ENCODE measurements at regions of chr13 and their contacts with region 1.

Region 1: GRCh38 chr13:21603531-21604448 is at the start of gene MICU2:
- DNase-seq: peak; percentile 91 to 98 (median 95)
- ATAC-seq: peak; percentile 93
- H3K4me3 ChIP-seq: peak within 1 kb of the TSS; percentile 88
- H3K4me3 Mint-ChIP-seq: peak within 1 kb of the TSS; percentile 97
- H3K27ac ChIP-seq: peak within 1 kb of the TSS; percentile 91 to 97
- H3K27ac Mint-ChIP-seq: peak within 1 kb of the TSS; percentile 95
- H3K4me1 ChIP-seq: peaks cover 28% of the 10 kb centered on the region
- H3K4me1 Mint-ChIP-seq: peaks cover 45% of the 10 kb centered on the region
- H3K27me3 ChIP-seq: peaks cover 0 to under 1% of the 10 kb centered on the region in 2 experiments
- H3K27me3 Mint-ChIP-seq: peaks cover 10% of the 10 kb centered on the region
- CTCF ChIP-seq: no peak
- total RNA-seq, gene MICU2: 25.4 to 28.4 TPM

Region 2: DNA sequence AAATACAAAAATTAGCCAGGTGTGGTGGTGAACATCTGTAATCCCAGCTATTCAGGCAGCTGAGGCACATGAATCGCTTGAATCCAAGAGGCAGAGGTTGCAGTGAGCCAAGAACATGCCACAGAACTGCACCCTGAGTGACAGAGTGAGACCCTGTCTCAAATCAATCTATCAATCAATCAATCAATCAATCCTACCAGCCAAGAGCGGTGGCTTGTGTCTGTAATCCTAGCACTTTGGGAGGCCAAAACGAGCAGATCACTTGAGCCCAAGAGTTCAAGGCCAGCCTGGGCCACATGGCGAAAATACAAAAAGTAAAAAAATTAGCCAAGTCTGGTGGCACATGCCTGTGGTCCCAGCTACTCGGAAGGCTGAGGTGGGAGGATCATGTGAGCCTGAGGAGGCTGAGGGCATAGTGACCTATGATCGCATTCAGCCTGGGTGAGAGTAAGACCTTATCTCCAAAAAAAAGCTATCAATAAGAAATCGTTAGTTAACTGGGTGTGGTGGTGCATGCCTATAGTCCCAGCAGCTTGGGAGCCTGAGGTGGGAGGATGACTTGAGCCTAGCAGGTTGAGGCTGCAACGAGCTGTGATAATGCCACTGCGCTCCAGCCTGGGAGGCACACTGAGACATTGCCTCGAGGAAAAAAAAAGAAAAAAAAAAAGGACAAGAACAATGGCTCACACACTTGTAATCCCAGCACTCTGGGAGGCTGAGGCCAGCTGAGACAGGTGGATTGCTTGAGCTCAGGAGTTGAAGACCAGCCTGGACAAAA is 1837.4 kb before region 1 on chr13:
- CTCF ChIA-PET with region 1: no interaction called
- POLR2A ChIA-PET with region 1: no interaction called
- intact Hi-C with region 1: no loop called
- DNase-seq: no peak
- ATAC-seq: no peak
- H3K4me3 ChIP-seq: no peak overlapping the region
- H3K4me3 Mint-ChIP-seq: peak overlapping the region; percentile 56
- H3K27ac ChIP-seq: no peak overlapping the region
- H3K27ac Mint-ChIP-seq: peak overlapping the region; percentile 44
- H3K4me1 ChIP-seq: peaks cover 57% of the 10 kb centered on the region
- H3K4me1 Mint-ChIP-seq: peaks cover 68% of the 10 kb centered on the region
- H3K27me3 ChIP-seq: no peaks in the 10 kb centered on the region
- H3K27me3 Mint-ChIP-seq: no peaks in the 10 kb centered on the region
- CTCF ChIP-seq: no peak

Region 3: DNA sequence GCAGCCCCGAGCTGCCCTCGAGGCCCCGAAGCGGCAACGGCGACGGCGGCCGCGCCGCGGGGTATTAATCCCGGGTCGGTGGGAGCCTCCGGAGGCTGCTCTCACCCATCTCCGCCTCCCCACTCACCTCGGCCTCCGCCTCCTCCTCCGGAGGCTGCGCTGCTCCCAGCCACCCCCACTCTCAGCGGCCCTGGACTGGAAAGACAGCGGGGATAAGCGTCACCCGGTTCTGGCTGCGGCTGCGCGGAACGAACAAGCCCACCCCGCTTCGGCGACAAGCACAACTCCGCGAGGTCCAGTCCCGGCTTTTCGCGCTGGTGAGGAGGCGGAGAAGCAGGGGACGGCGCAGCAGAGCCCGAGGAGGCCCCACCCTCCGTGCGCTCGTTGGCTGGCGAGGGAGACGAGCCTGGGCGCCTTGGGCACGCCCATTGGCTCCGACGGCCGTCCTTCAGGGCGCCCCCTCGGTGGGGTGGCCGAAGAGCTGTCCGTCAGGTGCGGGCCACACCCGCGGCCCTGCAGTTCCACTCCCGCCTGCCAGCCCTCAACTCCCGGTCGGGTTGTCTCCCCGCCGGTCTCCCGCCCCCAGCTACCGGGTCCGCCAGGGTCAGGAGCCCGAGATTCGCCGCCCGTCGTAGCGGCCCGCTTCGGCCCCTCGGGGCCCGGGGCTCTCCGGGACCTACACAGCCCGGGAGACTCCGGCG is 1740.3 kb before region 1 on chr13 and contains the start of gene ZMYM5:
- CTCF ChIA-PET with region 1: no interaction called
- POLR2A ChIA-PET with region 1: interaction called, 7 read pairs
- intact Hi-C with region 1: loop called in 1 of 2 experiments (anchors 5 kb)
- DNase-seq: peak; percentile 85 to 98 (median 93)
- ATAC-seq: peak; percentile 81
- H3K4me3 ChIP-seq: peak within 1 kb of the TSS; percentile 84
- H3K4me3 Mint-ChIP-seq: peak within 1 kb of the TSS; percentile 98
- H3K27ac ChIP-seq: peak within 1 kb of the TSS; percentile 92
- H3K27ac Mint-ChIP-seq: peak within 1 kb of the TSS; percentile 91
- H3K4me1 ChIP-seq: peaks cover 33% of the 10 kb centered on the region
- H3K4me1 Mint-ChIP-seq: peaks cover 37% of the 10 kb centered on the region
- H3K27me3 ChIP-seq: no peaks in the 10 kb centered on the region
- H3K27me3 Mint-ChIP-seq: no peaks in the 10 kb centered on the region
- CTCF ChIP-seq: no peak
- total RNA-seq, gene ZMYM5: 29.2 to 32.1 TPM

Region 4: DNA sequence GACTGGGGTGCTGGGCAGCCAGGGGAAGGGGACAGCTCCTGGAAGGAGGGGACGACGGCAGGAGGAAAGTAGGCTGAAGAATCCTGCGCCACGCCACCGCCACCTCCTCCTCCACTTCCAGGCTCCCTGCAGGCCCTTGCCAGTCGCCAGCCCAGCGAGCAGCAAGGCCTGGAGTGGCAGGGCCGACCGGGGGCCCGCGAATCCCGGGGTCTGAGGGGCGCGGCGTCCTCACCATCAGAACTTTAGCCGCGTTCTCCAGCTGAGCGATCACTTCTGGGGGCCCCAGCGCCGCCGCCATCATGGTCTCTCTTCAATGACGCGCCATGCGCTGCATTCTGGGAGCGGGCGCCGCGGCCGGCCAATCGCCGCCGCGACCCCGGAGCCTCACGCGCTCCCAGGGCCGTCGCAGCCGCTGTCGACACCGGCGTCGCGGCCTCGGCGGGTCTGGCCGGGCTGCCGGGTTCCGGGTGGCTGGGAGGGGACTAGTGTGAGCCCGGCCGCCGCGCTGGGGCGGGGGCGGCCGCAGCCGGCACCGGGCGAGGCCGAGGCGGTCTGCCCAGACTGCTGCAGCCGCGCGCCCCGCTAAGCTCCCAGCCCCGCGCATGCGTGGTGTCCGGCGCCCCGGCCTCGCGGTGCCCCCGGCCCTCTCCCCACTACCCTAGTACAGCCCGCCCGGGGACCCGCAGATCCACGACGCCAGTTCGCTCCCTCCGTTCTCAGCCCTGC is 701.2 kb before region 1 on chr13 and contains the start of gene XPO4:
- CTCF ChIA-PET with region 1: no interaction called
- POLR2A ChIA-PET with region 1: interaction called, 3 read pairs
- intact Hi-C with region 1: loop called in 1 of 2 experiments (anchors 5 kb)
- DNase-seq: peak; percentile 52 to 89 (median 70)
- ATAC-seq: peak; percentile 96
- H3K4me3 ChIP-seq: peak within 1 kb of the TSS; percentile 99
- H3K4me3 Mint-ChIP-seq: peak within 1 kb of the TSS; percentile 97
- H3K27ac ChIP-seq: peak within 1 kb of the TSS; percentile 79 to 88
- H3K27ac Mint-ChIP-seq: peak within 1 kb of the TSS; percentile 90
- H3K4me1 ChIP-seq: peaks cover 22% of the 10 kb centered on the region
- H3K4me1 Mint-ChIP-seq: peaks cover 32% of the 10 kb centered on the region
- H3K27me3 ChIP-seq: no peaks in the 10 kb centered on the region
- H3K27me3 Mint-ChIP-seq: no peaks in the 10 kb centered on the region
- CTCF ChIP-seq: no peak
- total RNA-seq, gene XPO4: 22.5 to 22.7 TPM

Region 5: DNA sequence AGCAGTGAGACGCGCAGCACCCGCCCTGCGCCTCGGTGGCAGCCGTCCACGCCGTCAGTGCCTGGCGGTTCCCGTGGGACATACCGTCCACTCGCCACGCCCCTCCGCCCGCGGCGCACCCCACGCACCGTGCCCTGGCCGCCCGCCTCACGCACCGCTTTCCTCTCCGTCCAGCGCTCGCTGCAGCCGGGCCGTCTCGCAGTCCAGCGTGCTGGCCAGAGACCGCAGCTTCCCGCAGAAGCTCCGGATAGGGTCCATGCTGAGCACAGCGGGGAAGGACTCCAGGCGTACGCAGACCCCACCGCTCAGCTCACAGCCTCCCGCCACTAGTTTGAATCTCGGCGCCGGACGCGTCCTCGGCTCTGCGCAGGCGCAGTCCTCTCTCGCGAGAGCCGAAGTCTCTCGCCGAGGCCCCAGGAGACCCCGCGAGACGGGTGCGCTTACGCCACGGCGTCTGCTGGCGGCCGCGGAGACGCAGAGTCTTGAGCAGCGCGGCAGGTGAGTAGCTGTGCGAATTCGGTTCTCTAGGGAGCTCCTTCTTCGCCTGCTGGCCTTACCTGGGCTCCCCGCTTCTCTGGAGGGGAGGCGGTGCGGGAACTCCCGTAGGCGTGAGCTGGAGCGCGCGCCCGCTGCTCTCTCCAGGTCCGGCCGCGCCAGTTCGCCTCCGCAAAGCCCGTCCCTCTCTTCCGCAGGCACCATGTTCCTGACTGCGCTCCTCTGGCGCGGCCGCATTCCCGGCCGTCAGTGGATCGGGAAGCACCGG is 427.4 kb before region 1 on chr13 and contains the starts of genes MRPL57 and SKA3:
- CTCF ChIA-PET with region 1: no interaction called
- POLR2A ChIA-PET with region 1: interaction called, 21 read pairs
- intact Hi-C with region 1: loop called in 1 of 2 experiments (anchors 2 kb)
- DNase-seq: peak; percentile 87 to 98 (median 92)
- ATAC-seq: peak; percentile 98
- H3K4me3 ChIP-seq: peak within 1 kb of the TSS; percentile 100
- H3K4me3 Mint-ChIP-seq: peak within 1 kb of the TSS; percentile 90
- H3K27ac ChIP-seq: peak within 1 kb of the TSS; percentile 83 to 95
- H3K27ac Mint-ChIP-seq: peak within 1 kb of the TSS; percentile 96
- H3K4me1 ChIP-seq: peaks cover 22% of the 10 kb centered on the region
- H3K4me1 Mint-ChIP-seq: peaks cover 29% of the 10 kb centered on the region
- H3K27me3 ChIP-seq: no peaks in the 10 kb centered on the region
- H3K27me3 Mint-ChIP-seq: no peaks in the 10 kb centered on the region
- CTCF ChIP-seq: no peak
- total RNA-seq, gene MRPL57: 10.0 to 10.5 TPM
- total RNA-seq, gene SKA3: 0.30 TPM in 1 of 2 experiments, not detected in the other

Region 6: DNA sequence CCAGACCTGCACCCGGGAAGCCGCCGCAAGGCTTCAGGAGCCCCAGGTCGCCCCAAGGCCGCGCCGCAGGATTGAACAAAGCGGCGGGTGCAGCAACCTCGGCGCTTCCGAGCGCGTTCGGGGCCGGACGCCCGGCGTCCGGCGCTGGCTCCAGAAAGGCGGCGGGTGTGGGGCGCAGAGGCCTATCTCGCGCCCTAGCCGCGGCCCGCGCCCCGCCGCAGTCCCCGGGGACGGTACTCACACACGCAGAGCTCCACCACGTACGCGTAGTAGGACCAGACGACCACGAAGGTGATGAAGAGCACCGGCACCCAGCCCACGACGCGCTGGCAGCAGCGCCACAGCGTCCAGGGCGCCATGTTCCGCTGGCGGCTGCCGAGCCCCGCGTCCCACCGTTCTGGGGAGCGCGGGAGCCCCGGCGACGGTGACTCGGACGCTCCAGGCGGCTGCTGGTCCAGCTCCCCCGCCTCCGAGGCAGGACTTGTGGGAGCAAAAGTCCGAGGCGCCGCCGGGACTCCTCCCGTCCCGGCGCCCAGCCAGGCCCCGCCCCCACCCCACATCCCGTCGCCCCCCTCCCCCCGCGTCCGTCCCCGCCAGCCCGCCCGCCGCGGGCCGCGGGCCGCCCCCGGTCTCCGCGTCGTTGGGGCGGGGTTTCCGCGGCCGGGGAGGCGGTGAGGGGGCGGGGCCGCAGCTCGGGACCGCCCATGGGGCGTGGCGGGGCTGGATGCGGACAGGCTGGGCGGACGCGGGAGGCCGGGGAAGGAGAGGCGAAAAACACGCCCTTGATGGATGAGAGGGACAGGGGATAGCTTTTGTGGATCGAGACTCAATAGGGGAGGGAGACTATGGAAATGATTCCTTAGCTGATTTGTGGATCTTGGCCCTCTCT is 144.7 kb before region 1 on chr13 and contains the start of gene ZDHHC20:
- CTCF ChIA-PET with region 1: no interaction called
- POLR2A ChIA-PET with region 1: interaction called, 16 read pairs
- intact Hi-C with region 1: loop called in 1 of 2 experiments (anchors 2 kb)
- DNase-seq: peak; percentile 75 to 95 (median 88)
- ATAC-seq: peak; percentile 85
- H3K4me3 ChIP-seq: peak within 1 kb of the TSS; percentile 90
- H3K4me3 Mint-ChIP-seq: peak within 1 kb of the TSS; percentile 97
- H3K27ac ChIP-seq: peak within 1 kb of the TSS; percentile 56 to 84
- H3K27ac Mint-ChIP-seq: peak within 1 kb of the TSS; percentile 92
- H3K4me1 ChIP-seq: peaks cover 12% of the 10 kb centered on the region
- H3K4me1 Mint-ChIP-seq: peaks cover 42% of the 10 kb centered on the region
- H3K27me3 ChIP-seq: no peaks in the 10 kb centered on the region
- H3K27me3 Mint-ChIP-seq: no peaks in the 10 kb centered on the region
- CTCF ChIP-seq: no peak
- total RNA-seq, gene ZDHHC20: 62.8 to 65.1 TPM

Region 7: GRCh38 chr13:21638319-21639282 is 34.8 kb after region 1 on chr13:
- CTCF ChIA-PET with region 1: interaction called, 3 read pairs
- POLR2A ChIA-PET with region 1: interaction called, 12 read pairs
- intact Hi-C with region 1: no loop called
- DNase-seq: peak in 9 of 14 experiments; percentile 8 to 67 (median 20)
- ATAC-seq: no peak
- H3K4me3 ChIP-seq: no peak overlapping the region
- H3K4me3 Mint-ChIP-seq: no peak overlapping the region
- H3K27ac ChIP-seq: no peak overlapping the region
- H3K27ac Mint-ChIP-seq: no peak overlapping the region
- H3K4me1 ChIP-seq: no peaks in the 10 kb centered on the region
- H3K4me1 Mint-ChIP-seq: no peaks in the 10 kb centered on the region
- H3K27me3 ChIP-seq: peaks cover 0 to 8% of the 10 kb centered on the region in 2 experiments
- H3K27me3 Mint-ChIP-seq: peaks cover 19% of the 10 kb centered on the region
- CTCF ChIP-seq: peak; percentile 96

Region 8: GRCh38 chr13:21717817-21718216 is 114.0 kb after region 1 on chr13:
- CTCF ChIA-PET with region 1: no interaction called
- POLR2A ChIA-PET with region 1: no interaction called
- intact Hi-C with region 1: no loop called
- DNase-seq: no peak
- ATAC-seq: no peak
- H3K4me3 ChIP-seq: no peak overlapping the region
- H3K4me3 Mint-ChIP-seq: no peak overlapping the region
- H3K27ac ChIP-seq: no peak overlapping the region
- H3K27ac Mint-ChIP-seq: no peak overlapping the region
- H3K4me1 ChIP-seq: no peaks in the 10 kb centered on the region
- H3K4me1 Mint-ChIP-seq: no peaks in the 10 kb centered on the region
- H3K27me3 ChIP-seq: peaks cover 6 to 16% of the 10 kb centered on the region in 2 experiments
- H3K27me3 Mint-ChIP-seq: peaks cover 59% of the 10 kb centered on the region
- CTCF ChIP-seq: no peak

Region 9: GRCh38 chr13:22061351-22061805 is 457.6 kb after region 1 on chr13:
- CTCF ChIA-PET with region 1: no interaction called
- POLR2A ChIA-PET with region 1: interaction called, 16 read pairs
- intact Hi-C with region 1: loop called in 1 of 2 experiments (anchors 2 kb)
- DNase-seq: peak; percentile 25 to 80 (median 55)
- ATAC-seq: peak; percentile 81
- H3K4me3 ChIP-seq: no peak overlapping the region
- H3K4me3 Mint-ChIP-seq: peak overlapping the region; percentile 61
- H3K27ac ChIP-seq: peak overlapping the region; percentile 83 to 93
- H3K27ac Mint-ChIP-seq: peak overlapping the region; percentile 95
- H3K4me1 ChIP-seq: peaks cover 74% of the 10 kb centered on the region
- H3K4me1 Mint-ChIP-seq: peaks cover 85% of the 10 kb centered on the region
- H3K27me3 ChIP-seq: no peaks in the 10 kb centered on the region
- H3K27me3 Mint-ChIP-seq: no peaks in the 10 kb centered on the region
- CTCF ChIP-seq: peak; percentile 38

Measured in CD4-positive, alpha-beta T cell (primary cell).